ENCODE measurements at regions of chr14 and their contacts with region 1.

Region 1: DNA sequence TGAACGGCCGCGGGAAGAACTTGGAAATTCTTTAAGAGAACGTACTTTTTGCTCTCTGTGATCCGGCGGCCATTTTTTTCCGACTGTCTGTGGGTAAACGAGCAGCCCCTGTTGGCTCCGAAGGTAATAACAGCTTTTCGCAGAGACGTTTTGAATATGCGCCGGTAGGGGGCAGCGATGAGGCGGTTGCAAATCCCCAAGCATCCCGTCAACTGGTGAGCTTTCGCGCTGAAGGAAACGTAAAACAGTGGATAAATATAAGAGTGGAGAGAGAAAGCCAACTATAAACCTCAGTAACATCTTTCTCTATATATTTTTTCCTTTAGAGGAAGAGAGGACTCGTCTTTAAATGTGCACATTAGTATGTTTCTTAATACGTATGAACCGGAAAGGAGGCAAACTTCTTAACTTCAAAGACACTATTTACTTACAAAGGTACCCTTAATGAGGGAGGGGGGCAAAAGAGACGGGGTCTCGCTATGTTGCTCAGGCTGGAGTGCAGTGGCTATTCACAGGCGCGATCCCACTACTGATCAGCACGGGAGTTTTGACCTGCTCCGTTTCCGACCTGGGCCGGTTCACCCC is 9.6 kb upstream of the NEMF start:
- DNase-seq: peak; percentile 80 to 87
- H3K4me3 ChIP-seq: peak overlapping the region in 2 of 3 donors; percentile 26 to 59
- H3K27ac ChIP-seq: peak overlapping the region; percentile 95 to 99 (median 99)
- H3K4me1 ChIP-seq: peaks cover 0 to 6% of the 10 kb centered on the region in 2 donors
- H3K27me3 ChIP-seq: no peaks in the 10 kb centered on the region
- CTCF ChIP-seq: peak; percentile 100
- POLR2A ChIP-seq: no peak

Region 2: GRCh38 chr14:49920935-49921334 is 58.8 kb after region 1 on chr14:
- intact Hi-C with region 1: no loop called
- DNase-seq: no peak
- H3K4me3 ChIP-seq: no peak overlapping the region
- H3K27ac ChIP-seq: no peak overlapping the region
- H3K4me1 ChIP-seq: no peaks in the 10 kb centered on the region
- H3K27me3 ChIP-seq: no peaks in the 10 kb centered on the region
- CTCF ChIP-seq: no peak
- POLR2A ChIP-seq: no peak

Region 3: DNA sequence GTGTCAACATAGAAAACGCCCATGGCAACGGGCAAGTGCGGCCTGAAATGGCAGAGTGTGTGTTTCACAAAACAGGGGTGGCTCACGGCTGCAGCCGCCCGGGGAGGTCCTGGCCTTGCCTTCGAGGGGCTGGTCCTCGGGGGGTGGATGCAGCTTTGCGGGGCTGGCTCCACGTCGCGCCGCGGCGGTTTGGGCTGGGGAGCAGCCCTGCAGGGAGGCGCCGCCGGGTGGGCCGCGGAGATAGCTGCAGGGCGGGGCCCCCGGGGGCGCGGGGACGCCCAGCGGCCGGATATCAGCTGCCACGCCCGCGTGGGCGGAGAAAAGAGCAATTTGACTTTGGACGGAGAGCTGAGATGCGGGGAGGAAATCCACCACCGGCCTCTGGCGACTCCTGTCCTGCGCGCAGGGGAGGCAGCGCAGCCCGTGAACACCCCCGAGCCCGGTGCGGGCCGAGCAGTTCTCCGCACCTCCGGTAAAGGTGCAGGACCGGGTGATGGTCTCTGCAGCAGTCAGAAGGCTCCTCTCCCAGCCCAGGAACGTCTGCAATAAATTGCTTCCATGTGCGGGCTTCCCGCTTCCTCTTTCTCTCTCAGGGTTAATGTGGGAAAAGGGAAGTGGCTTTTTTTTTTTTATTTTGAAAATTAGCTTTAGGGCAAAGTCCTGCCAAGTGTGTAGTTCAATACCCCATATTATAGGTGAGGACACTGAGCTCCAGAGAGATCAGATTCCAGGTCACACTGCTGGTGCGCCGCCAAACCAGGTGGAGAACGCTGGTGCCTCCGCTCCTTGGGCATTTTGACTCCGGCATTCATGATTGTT is 141.2 kb after region 1 on chr14:
- intact Hi-C with region 1: no loop called
- DNase-seq: peak; percentile 76 to 77
- H3K4me3 ChIP-seq: peak overlapping the region in 2 of 3 donors; percentile 42 to 63
- H3K27ac ChIP-seq: peak overlapping the region; percentile 93 to 96 (median 93)
- H3K4me1 ChIP-seq: peaks cover 44 to 47% of the 10 kb centered on the region in 2 donors
- H3K27me3 ChIP-seq: no peaks in the 10 kb centered on the region
- CTCF ChIP-seq: peak in 2 of 6 experiments; percentile 10 to 22
- POLR2A ChIP-seq: peak; percentile 11 to 65

Region 4: GRCh38 chr14:50116181-50116956 is 254.2 kb after region 1 on chr14 and contains the start of gene VCPKMT:
- intact Hi-C with region 1: loop called (anchors 5 kb)
- DNase-seq: peak; percentile 95 to 96
- H3K4me3 ChIP-seq: peak within 1 kb of the TSS; percentile 35 to 86 (median 77)
- H3K27ac ChIP-seq: peak within 1 kb of the TSS; percentile 63 to 85 (median 82)
- H3K4me1 ChIP-seq: peaks cover 5 to 19% of the 10 kb centered on the region in 2 donors
- H3K27me3 ChIP-seq: no peaks in the 10 kb centered on the region
- CTCF ChIP-seq: no peak
- POLR2A ChIP-seq: peak; percentile 52 to 96
- total RNA-seq, gene VCPKMT: 4.5 to 16.0 (median 12.3) TPM

Region 5: DNA sequence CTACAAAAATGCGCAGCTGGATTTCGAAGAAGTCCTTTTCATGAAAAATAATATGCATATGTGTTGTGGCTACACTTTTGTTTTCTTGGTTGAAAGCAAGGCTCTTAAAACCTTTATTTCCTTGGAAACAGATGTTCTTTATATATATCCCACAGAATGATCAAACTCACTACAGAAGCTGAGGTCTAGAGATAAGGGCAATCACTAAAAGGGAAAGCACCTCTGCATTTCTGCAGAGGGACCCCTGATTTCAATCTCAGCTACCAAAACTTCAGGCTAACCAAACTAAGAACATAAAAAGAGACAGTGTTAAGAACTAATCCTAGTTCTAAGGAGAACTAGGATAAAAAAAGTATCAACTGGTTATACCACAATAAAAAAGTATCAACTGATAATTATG is 599.9 kb after region 1 on chr14:
- intact Hi-C with region 1: no loop called
- DNase-seq: no peak
- H3K4me3 ChIP-seq: no peak overlapping the region
- H3K27ac ChIP-seq: no peak overlapping the region
- H3K4me1 ChIP-seq: no peaks in the 10 kb centered on the region
- H3K27me3 ChIP-seq: no peaks in the 10 kb centered on the region
- CTCF ChIP-seq: no peak
- POLR2A ChIP-seq: no peak

Measured in thyroid gland (tissue), 4 donors.